ENCODE measurements at regions of chr12 and their contacts with region 1.

Region 1: GRCh38 chr12:32755654-32756475 is at the start of gene YARS2:
- DNase-seq: peak; percentile 96
- H3K4me3 Mint-ChIP-seq: peak within 1 kb of the TSS; percentile 93
- H3K27ac Mint-ChIP-seq: peak within 1 kb of the TSS; percentile 93
- H3K4me1 Mint-ChIP-seq: peaks cover 23% of the 10 kb centered on the region
- H3K27me3 Mint-ChIP-seq: no peaks in the 10 kb centered on the region
- total RNA-seq, gene YARS2: 30.5 and 33.0 TPM in 2 replicates

Region 2: DNA sequence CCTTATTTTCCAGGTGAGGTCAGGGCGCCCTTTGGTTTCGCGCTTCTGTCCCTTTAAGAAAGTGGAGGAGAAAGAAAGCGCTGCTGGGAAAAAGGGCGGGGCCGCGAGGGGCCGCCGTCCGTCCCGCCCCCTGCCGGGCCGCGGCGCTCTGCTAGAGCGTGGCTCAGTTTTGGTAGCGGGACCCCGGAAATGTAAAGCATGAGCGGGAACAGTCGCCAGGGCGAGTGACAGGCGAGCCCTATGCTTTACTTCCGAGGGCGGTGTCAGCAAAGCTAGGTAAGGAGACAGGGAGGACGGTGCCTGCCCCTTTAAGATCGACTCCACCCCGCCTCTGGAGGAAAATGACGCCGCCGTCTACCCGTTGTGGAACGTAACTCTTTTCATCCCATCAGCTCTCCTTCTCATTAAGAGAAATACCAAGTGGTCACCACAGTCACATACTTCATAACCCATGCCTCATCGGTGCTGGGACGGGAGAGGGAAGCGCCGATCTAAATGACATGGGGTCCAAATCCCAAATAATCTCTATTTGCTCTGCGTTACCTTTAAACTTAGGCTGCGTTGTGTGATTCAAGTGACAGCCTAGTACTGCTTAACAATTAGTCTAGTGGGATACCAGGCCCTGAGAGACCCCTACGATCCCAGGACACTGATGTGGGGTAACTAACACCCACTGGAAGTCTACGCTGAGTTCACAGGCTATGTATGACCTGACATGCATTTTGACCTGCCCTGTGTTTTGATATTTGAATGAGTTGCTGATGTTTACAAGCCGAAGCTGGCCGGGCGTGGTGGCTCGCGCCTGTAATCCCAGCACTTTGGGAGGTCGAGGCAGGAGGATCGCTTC is 1096.6 kb before region 1 on chr12 and contains the start of gene ETFBKMT:
- intact Hi-C with region 1: loop called (anchors 1 kb)
- DNase-seq: peak; percentile 98
- H3K4me3 Mint-ChIP-seq: peak within 1 kb of the TSS; percentile 93
- H3K27ac Mint-ChIP-seq: peak within 1 kb of the TSS; percentile 99
- H3K4me1 Mint-ChIP-seq: peaks cover 15% of the 10 kb centered on the region
- H3K27me3 Mint-ChIP-seq: no peaks in the 10 kb centered on the region
- total RNA-seq, gene ETFBKMT: 0.52 and 0.84 TPM in 2 replicates

Region 3: DNA sequence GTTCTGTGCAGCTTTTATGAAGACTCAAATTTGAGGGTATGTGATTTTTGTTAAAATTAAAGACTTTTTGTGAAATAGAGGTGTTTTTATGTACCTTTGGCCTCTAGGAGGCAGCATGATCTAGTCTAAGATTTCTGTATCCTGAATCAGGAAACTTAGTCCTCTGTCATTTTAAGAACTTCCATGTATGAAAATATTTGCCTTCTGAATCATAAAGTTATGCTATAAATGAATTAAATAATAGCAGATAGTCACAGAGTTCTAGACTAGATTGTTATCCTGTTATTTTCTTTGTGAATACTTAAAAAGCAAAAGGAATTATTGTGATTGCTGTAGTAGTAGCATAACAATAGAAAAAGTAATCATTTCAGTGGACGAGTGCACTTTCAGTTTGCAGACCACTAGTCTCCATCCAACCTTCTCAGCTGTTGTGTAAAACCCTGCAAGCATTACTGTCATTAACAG is 300.2 kb before region 1 on chr12:
- intact Hi-C with region 1: loop called (anchors 1 kb)
- DNase-seq: peak; percentile 76
- H3K4me3 Mint-ChIP-seq: no peak overlapping the region
- H3K27ac Mint-ChIP-seq: no peak overlapping the region
- H3K4me1 Mint-ChIP-seq: no peaks in the 10 kb centered on the region
- H3K27me3 Mint-ChIP-seq: peaks cover 7% of the 10 kb centered on the region

Region 4: GRCh38 chr12:32918890-32919801 is 163.3 kb after region 1 on chr12:
- intact Hi-C with region 1: loop called (anchors 1 kb)
- DNase-seq: no peak
- H3K4me3 Mint-ChIP-seq: no peak overlapping the region
- H3K27ac Mint-ChIP-seq: no peak overlapping the region
- H3K4me1 Mint-ChIP-seq: no peaks in the 10 kb centered on the region
- H3K27me3 Mint-ChIP-seq: peaks cover 2% of the 10 kb centered on the region

Region 5: DNA sequence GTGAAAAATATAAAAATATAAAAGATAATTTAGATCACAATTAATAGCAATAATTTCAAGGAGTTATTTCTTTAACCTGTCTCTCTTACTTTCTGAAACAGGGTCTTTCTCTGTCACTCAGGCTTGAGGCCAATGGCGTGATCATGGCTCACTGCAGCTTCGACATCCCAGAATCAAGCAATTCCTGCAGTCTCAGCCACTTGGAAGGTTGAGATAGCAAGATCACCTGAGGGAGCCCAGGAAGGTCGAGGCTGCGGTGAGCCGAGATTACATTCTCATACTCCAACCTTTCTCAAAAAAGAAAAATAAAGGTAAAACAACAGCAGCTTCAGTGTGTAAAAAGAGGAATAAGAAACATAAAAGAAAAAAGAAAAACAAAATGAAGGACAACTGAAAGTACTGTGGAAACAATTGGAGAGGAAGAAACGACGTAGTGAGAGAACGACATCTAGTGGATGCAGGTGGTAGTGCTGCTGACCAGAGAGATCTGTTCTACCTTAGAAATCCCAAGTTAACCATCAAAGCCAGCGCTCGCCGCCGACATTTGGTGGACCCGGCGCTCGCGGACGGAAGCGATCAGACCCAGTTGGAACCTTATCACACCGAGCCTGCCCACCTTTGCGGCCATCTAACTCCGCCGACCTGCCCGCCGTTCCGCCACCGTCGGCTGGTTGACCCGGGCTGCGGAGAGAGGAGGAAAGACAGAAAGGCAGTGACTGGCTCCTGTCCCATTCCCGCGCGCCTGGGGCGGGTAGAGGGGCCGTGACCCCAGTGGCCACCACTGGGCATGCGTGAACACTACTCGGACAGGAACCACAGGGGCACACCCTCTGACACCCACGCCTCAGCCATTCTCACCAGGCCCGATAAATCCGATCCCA is 1462.5 kb after region 1 on chr12:
- intact Hi-C with region 1: loop called (anchors 1 kb)
- DNase-seq: peak; percentile 91
- H3K4me3 Mint-ChIP-seq: peak overlapping the region; percentile 89
- H3K27ac Mint-ChIP-seq: peak overlapping the region; percentile 80
- H3K4me1 Mint-ChIP-seq: peaks cover 8% of the 10 kb centered on the region
- H3K27me3 Mint-ChIP-seq: peaks cover 9% of the 10 kb centered on the region